ENCODE measurements at regions of chr20 and their contacts with region 1.

Region 1: DNA sequence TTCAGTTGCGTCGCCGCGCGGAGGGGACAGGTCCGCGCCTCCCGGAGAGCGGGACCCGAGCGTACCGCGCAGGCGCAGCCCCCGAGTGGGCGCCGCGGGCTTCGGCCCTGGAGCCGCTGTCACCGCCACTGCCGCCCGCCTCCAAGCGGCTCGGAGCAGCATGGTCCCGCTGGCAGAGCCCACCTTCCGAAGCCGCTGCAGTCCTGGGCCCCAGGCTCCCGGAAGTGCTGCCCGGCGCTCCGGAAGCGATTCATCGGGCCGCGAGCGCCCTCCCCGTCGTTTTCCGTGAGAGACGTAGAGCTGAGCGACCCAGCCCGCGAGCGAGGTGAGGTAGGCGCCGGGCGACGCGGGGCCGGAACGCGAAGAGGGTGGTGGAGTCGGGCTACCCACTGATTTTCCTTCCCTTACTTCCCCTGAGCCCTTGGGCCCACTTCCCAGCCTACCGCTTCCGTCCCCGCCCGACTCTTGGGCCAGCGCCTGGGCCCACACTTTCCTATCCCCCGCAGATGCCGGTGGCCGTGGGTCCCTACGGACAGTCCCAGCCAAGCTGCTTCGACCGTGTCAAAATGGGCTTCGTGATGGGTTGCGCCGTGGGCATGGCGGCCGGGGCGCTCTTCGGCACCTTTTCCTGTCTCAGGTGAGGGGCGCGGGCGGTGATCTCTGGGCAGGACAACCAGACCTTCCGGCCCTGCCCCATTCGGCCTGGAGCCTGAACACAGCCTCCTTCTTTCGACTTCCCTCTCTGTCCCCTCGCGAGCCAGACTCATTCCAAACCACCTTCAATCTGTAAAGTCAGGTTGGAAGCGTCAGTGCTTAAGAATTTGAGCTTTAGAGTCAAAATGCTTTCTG is at the starts of genes NFS1 and ROMO1:
- DNase-seq: peak; percentile 80 to 94
- ATAC-seq: peak; percentile 86 to 93 (median 89)
- H3K4me3 ChIP-seq: peak within 1 kb of the TSS; percentile 95
- H3K4me3 Mint-ChIP-seq: peak within 1 kb of the TSS; percentile 99
- H3K27ac ChIP-seq: peak within 1 kb of the TSS; percentile 93
- H3K27ac Mint-ChIP-seq: peak within 1 kb of the TSS; percentile 89 to 96
- H3K4me1 ChIP-seq: peaks cover 12% of the 10 kb centered on the region
- H3K4me1 Mint-ChIP-seq: peaks cover 41 to 53% of the 10 kb centered on the region in 2 donors
- H3K27me3 ChIP-seq: no peaks in the 10 kb centered on the region
- H3K27me3 Mint-ChIP-seq: no peaks in the 10 kb centered on the region
- CTCF ChIP-seq: peak; percentile 24
- total RNA-seq, gene NFS1: 11.3 to 20.8 (median 16.0) TPM
- total RNA-seq, gene ROMO1: 38.3 to 49.7 (median 40.5) TPM

Region 2: DNA sequence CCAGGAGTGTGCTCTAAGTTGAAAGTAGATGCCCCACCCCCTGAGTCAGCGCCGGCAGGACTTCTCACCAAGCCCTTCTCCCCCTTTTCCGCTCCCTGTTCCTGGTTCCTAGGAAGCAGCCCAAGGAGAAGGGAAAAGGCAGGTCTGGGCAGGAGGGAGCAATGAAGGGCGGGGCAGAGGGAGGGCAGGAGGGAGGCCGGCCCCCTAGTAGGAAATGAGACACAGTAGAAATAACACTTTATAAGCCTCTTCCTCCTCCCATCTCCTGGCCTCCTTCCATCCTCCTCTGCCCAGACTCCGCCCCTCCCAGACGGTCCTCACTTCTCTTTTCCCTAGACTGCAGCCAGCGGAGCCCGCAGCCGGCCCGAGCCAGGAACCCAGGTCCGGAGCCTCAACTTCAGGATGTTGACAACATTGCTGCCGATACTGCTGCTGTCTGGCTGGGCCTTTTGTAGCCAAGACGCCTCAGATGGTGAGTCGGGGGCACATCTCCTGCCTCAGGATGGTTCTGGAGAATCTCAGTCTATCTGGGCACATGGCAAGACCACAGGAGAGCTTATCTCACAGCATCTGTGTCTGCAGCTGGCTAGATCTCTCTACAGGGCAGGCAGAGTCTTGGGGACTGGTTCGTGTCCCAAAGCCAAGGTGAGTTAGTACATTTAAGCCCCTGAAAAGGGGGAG is 527.5 kb before region 1 on chr20 and contains the start of gene PROCR:
- intact Hi-C with region 1: no loop called
- DNase-seq: peak; percentile 21 to 25
- ATAC-seq: peak; percentile 72 to 87 (median 84)
- H3K4me3 ChIP-seq: peak within 1 kb of the TSS; percentile 24
- H3K4me3 Mint-ChIP-seq: peak within 1 kb of the TSS; percentile 95
- H3K27ac ChIP-seq: peak within 1 kb of the TSS; percentile 31
- H3K27ac Mint-ChIP-seq: peak within 1 kb of the TSS; percentile 80 to 88
- H3K4me1 ChIP-seq: peaks cover 15% of the 10 kb centered on the region
- H3K4me1 Mint-ChIP-seq: peaks cover 31 to 32% of the 10 kb centered on the region in 2 donors
- H3K27me3 ChIP-seq: no peaks in the 10 kb centered on the region
- H3K27me3 Mint-ChIP-seq: no peaks in the 10 kb centered on the region
- CTCF ChIP-seq: no peak
- total RNA-seq, gene PROCR: 6.4 to 9.3 (median 6.4) TPM

Region 3: DNA sequence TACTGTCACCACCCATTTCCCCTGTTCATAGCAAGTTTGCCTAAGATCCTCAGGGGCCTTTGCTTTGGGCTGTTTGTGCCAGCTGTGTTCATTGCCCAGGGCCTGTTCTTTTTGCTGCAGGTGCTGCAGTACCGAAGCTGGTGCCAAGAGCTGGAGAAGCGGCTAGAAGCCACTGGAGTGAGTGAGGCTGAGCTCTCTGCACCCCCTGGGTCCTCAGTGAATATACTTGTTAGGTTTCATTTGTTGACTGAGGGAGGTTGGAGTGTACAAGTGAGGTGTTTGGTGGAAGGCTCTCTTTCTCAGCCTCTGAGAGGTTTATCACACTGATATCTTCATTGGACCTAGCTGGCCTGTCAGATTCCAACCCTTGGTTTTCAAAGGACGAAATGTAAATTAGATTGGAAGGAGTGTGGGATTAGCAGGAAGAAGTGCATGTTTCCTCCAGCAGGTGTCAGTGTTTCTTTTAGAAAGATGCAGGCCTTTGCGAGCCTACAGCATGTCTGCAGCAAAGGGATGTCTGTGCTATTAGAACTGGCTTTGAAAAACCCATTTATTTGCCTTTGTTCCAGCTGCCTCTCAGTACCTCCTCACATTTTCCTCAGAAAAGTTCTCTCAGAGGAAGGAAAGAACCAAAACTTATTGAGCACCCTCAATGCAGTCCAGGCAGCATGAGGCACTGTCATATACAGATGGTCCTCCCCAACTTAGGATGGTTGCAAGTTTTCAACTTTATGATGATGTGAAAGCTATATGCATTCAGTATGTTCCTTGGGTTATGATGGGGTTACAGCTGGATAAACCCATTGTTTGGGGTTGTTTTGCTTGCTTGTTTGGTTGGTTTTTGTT is 235.7 kb before region 1 on chr20:
- intact Hi-C with region 1: loop called (anchors 10 kb)
- DNase-seq: peak; percentile 25 to 82
- ATAC-seq: peak; percentile 84 to 98 (median 92)
- H3K4me3 ChIP-seq: no peak overlapping the region
- H3K4me3 Mint-ChIP-seq: no peak overlapping the region
- H3K27ac ChIP-seq: no peak overlapping the region
- H3K27ac Mint-ChIP-seq: peak overlapping the region in 1 of 2 donors; percentile 21
- H3K4me1 ChIP-seq: no peaks in the 10 kb centered on the region
- H3K4me1 Mint-ChIP-seq: peaks cover 0 to 16% of the 10 kb centered on the region in 2 donors
- H3K27me3 ChIP-seq: no peaks in the 10 kb centered on the region
- H3K27me3 Mint-ChIP-seq: no peaks in the 10 kb centered on the region
- CTCF ChIP-seq: peak; percentile 83

Region 4: GRCh38 chr20:35601008-35601973 is 98.1 kb before region 1 on chr20:
- intact Hi-C with region 1: loop called (anchors 1 kb)
- DNase-seq: peak; percentile 61 to 91
- ATAC-seq: peak; percentile 83 to 88 (median 86)
- H3K4me3 ChIP-seq: peak overlapping the region; percentile 48
- H3K4me3 Mint-ChIP-seq: peak overlapping the region; percentile 76
- H3K27ac ChIP-seq: no peak overlapping the region
- H3K27ac Mint-ChIP-seq: peak overlapping the region in 1 of 2 donors; percentile 75
- H3K4me1 ChIP-seq: peaks cover 19% of the 10 kb centered on the region
- H3K4me1 Mint-ChIP-seq: peaks cover 0 to 12% of the 10 kb centered on the region in 2 donors
- H3K27me3 ChIP-seq: peaks cover 20% of the 10 kb centered on the region
- H3K27me3 Mint-ChIP-seq: peaks cover 24 to 37% of the 10 kb centered on the region in 2 donors
- CTCF ChIP-seq: peak; percentile 45

Region 5: DNA sequence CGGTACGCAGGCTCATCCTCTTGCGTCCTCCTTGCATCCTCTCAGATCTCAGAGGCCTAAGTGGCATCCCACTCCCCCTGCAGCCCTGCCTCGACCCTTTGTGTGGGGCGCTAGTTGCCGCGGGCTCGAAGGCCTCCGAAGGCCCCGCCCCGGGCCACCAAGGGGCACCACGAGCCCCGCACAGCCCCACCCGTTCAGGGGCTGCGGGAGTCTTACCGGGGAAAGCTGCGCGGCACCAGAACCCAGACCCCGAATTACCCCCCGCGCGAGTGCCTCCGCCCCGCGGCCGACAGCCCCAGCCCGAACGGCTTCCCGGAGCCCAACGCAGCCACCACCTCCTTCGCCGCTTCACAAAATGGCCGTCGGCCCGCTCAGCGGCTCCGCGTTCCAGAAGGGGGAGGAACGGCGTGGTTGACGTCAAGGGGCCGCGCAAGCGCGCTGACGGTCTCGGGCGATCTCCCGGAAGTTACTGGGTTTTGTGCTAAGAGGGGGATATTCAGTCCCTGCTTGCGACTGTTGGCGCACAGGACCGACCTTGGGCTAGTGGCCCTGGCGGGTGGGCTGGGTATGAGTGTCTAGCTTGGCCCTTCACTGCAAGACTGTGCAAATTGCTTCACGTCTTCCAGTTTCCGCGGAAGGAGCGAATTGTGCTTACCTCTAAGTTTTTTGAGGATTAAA is 34.7 kb before region 1 on chr20 and contains the starts of genes CPNE1 and RBM12:
- intact Hi-C with region 1: loop called (anchors 5 kb)
- DNase-seq: peak; percentile 93 to 98
- ATAC-seq: peak; percentile 68 to 87 (median 80)
- H3K4me3 ChIP-seq: peak within 1 kb of the TSS; percentile 81
- H3K4me3 Mint-ChIP-seq: peak within 1 kb of the TSS; percentile 96
- H3K27ac ChIP-seq: peak within 1 kb of the TSS; percentile 97
- H3K27ac Mint-ChIP-seq: peak within 1 kb of the TSS in 1 of 2 donors; percentile 100
- H3K4me1 ChIP-seq: peaks cover 22% of the 10 kb centered on the region
- H3K4me1 Mint-ChIP-seq: peaks cover 55% of the 10 kb centered on the region in 2 donors
- H3K27me3 ChIP-seq: no peaks in the 10 kb centered on the region
- H3K27me3 Mint-ChIP-seq: no peaks in the 10 kb centered on the region
- CTCF ChIP-seq: no peak
- total RNA-seq, gene CPNE1: 298 to 342 (median 334) TPM
- total RNA-seq, gene RBM12: 80.9 to 112 (median 89.4) TPM

Region 6: DNA sequence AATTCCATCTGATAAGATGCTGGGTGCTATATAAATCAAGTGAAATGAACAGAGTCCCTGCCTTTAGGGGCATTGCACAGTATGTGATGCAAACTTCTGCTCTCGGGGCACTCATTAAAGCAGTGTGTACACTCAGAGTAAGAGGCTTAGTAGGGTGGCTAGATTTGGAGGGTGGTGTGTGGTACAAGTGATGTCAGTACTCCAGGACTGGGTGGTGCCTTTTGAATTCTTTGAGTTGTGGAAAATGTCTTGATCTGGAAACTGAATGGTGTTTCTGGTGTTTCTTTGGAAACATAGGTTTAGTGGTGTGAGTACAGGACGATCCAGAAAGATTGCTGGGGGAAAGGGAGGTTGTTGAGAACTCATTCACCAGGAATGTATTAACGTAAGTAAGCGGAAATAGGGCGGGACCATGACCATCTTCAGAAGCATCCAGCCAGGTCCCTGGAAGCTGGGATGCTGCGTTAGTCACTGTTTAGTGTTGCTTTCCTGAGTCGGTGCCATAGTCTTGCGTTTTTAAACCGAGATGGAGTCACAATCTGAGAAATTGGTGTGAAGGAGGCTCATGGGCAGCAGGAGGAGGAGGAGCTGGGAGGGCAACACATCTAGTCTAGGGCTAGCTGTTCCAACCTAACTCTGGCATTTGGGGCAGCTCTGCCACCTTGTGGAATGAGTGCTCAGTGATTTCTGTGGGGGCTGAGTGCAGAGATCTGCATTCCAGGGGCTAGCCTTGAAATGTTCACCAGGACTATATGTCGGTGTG is 184.6 kb after region 1 on chr20:
- intact Hi-C with region 1: loop called (anchors 10 kb)
- DNase-seq: peak; percentile 38 to 77
- ATAC-seq: peak; percentile 76 to 97 (median 94)
- H3K4me3 ChIP-seq: no peak overlapping the region
- H3K4me3 Mint-ChIP-seq: no peak overlapping the region
- H3K27ac ChIP-seq: no peak overlapping the region
- H3K27ac Mint-ChIP-seq: peak overlapping the region; percentile 17 to 51
- H3K4me1 ChIP-seq: peaks cover 2% of the 10 kb centered on the region
- H3K4me1 Mint-ChIP-seq: peaks cover 7 to 19% of the 10 kb centered on the region in 2 donors
- H3K27me3 ChIP-seq: no peaks in the 10 kb centered on the region
- H3K27me3 Mint-ChIP-seq: no peaks in the 10 kb centered on the region
- CTCF ChIP-seq: peak; percentile 60

Measured in natural killer cell (primary cell).